ENCODE measurements at regions of chr11 and their contacts with region 1.

Region 1: GRCh38 chr11:126440792-126441514 is 85.5 kb downstream of the ST3GAL4 start:
- DNase-seq: peak; percentile 57 to 72 (median 58)
- H3K4me3 ChIP-seq: no peak overlapping the region
- H3K4me3 Mint-ChIP-seq: peak overlapping the region in 1 of 2 donors; percentile 35
- H3K27ac ChIP-seq: no peak overlapping the region
- H3K27ac Mint-ChIP-seq: peak overlapping the region in 1 of 7 donors; percentile 32
- H3K4me1 ChIP-seq: peaks cover 4% of the 10 kb centered on the region in 2 donors
- H3K4me1 Mint-ChIP-seq: peaks cover 5% of the 10 kb centered on the region
- H3K27me3 ChIP-seq: no peaks in the 10 kb centered on the region
- H3K27me3 Mint-ChIP-seq: peaks cover 0 to 1% (median 0%) of the 10 kb centered on the region in 3 donors
- CTCF ChIP-seq: peak; percentile 98

Region 2: GRCh38 chr11:125874556-125875124 is 566.3 kb before region 1 on chr11:
- intact Hi-C with region 1: no loop called
- DNase-seq: peak; percentile 11 to 44 (median 39)
- H3K4me3 ChIP-seq: no peak overlapping the region
- H3K4me3 Mint-ChIP-seq: no peak overlapping the region
- H3K27ac ChIP-seq: no peak overlapping the region
- H3K27ac Mint-ChIP-seq: no peak overlapping the region
- H3K4me1 ChIP-seq: no peaks in the 10 kb centered on the region
- H3K4me1 Mint-ChIP-seq: peaks cover 1% of the 10 kb centered on the region
- H3K27me3 ChIP-seq: peaks cover 0 to 2% of the 10 kb centered on the region in 2 donors
- H3K27me3 Mint-ChIP-seq: peaks cover 2 to 13% (median 4%) of the 10 kb centered on the region in 3 donors
- CTCF ChIP-seq: peak; percentile 82

Region 3: GRCh38 chr11:126480410-126481302 is 39.7 kb after region 1 on chr11:
- intact Hi-C with region 1: loop called (anchors 2 kb)
- DNase-seq: peak; percentile 72 to 81 (median 76)
- H3K4me3 ChIP-seq: peak overlapping the region in 1 of 3 experiments; percentile 45
- H3K4me3 Mint-ChIP-seq: peak overlapping the region; percentile 52 to 84
- H3K27ac ChIP-seq: no peak overlapping the region
- H3K27ac Mint-ChIP-seq: peak overlapping the region in 4 of 7 donors; percentile 37 to 53 (median 48)
- H3K4me1 ChIP-seq: peaks cover 13 to 14% of the 10 kb centered on the region in 2 donors
- H3K4me1 Mint-ChIP-seq: peaks cover 18% of the 10 kb centered on the region
- H3K27me3 ChIP-seq: no peaks in the 10 kb centered on the region
- H3K27me3 Mint-ChIP-seq: peaks cover 0 to 7% (median 3%) of the 10 kb centered on the region in 3 donors
- CTCF ChIP-seq: peak; percentile 95

Region 4: GRCh38 chr11:126547161-126547560 is 106.2 kb after region 1 on chr11:
- intact Hi-C with region 1: no loop called
- DNase-seq: no peak
- H3K4me3 ChIP-seq: no peak overlapping the region
- H3K4me3 Mint-ChIP-seq: no peak overlapping the region
- H3K27ac ChIP-seq: no peak overlapping the region
- H3K27ac Mint-ChIP-seq: no peak overlapping the region
- H3K4me1 ChIP-seq: no peaks in the 10 kb centered on the region
- H3K4me1 Mint-ChIP-seq: no peaks in the 10 kb centered on the region
- H3K27me3 ChIP-seq: peaks cover 2 to 20% of the 10 kb centered on the region in 2 donors
- H3K27me3 Mint-ChIP-seq: peaks cover 12 to 22% (median 22%) of the 10 kb centered on the region in 3 donors
- CTCF ChIP-seq: no peak

Region 5: DNA sequence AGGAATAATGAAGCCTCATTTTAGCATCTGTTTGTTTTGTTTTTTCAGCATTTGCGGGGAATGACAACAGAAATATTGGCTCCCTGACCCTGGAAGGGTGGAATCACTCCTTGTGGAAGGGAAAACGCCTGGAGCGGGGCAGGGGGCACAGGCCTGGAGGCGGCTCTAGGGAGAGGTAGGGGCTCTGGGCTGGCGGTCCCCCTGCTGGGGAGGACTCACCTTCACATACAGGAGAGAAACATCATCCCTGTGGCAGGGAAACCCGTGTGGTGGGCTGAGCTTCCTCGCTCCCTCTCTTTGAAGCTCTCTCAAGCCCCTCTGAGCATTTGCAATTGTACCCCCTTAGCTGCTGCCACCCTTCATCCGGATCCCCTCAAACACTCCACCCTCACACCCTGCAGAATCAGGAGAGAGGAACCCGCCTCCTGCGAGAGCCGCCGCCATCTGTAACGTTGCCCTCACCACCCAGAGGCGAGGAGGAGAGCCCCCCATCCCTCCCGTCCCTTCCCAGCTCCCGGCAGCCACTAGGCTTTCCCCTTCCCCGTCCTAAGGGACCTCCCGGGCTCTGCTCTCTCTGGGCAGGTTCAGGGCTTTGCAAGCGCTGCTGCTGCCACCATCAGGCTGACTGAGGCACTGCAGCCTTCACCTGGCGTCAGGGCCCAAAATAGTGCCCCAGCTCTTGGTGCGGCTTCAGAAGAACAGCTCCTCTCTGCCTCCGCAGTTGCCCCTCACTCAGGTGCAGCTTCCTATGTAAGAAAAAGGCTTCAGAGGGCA is 549.2 kb after region 1 on chr11:
- intact Hi-C with region 1: loop called (anchors 2 to 5 kb)
- DNase-seq: peak; percentile 1 to 42 (median 9)
- H3K4me3 ChIP-seq: no peak overlapping the region
- H3K4me3 Mint-ChIP-seq: no peak overlapping the region
- H3K27ac ChIP-seq: no peak overlapping the region
- H3K27ac Mint-ChIP-seq: no peak overlapping the region
- H3K4me1 ChIP-seq: no peaks in the 10 kb centered on the region
- H3K4me1 Mint-ChIP-seq: no peaks in the 10 kb centered on the region
- H3K27me3 ChIP-seq: peaks cover 2 to 10% of the 10 kb centered on the region in 2 donors
- H3K27me3 Mint-ChIP-seq: peaks cover 7 to 22% (median 12%) of the 10 kb centered on the region in 3 donors
- CTCF ChIP-seq: peak; percentile 90

Region 6: DNA sequence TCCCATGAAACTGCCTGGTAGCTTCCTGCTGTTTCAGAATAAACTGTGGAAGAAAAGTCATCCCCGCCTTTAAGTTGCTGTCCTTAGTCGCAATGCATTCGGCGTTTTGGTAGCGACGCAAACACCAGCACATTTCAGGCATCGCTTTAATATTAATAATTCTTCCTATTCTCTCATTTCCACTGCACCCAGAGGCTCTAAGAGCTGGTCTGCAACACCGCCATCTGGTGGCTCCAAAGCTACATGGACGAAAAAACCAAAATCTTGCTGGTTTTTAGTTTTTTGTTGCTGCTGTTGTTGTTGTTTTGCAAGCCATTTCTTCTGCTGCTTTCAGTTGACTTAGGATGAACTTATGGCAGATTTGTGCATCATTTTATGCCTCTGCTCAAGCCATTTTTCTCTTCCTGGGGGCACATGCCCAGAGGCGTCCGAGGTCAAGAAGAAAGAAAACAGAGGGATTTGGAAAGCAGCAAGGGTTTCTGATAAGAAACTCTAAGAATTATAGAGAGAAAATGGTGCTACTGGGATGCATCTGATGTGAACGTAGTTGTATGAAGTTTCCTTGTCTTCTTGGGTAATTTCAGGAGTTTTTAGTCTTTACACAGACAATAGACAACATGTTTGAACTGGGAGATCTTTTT is 905.0 kb after region 1 on chr11:
- intact Hi-C with region 1: loop called (anchors 5 to 10 kb)
- DNase-seq: no peak
- H3K4me3 ChIP-seq: no peak overlapping the region
- H3K4me3 Mint-ChIP-seq: no peak overlapping the region
- H3K27ac ChIP-seq: no peak overlapping the region
- H3K27ac Mint-ChIP-seq: no peak overlapping the region
- H3K4me1 ChIP-seq: no peaks in the 10 kb centered on the region
- H3K4me1 Mint-ChIP-seq: no peaks in the 10 kb centered on the region
- H3K27me3 ChIP-seq: no peaks in the 10 kb centered on the region
- H3K27me3 Mint-ChIP-seq: peaks cover 0 to 5% (median 4%) of the 10 kb centered on the region in 3 donors
- CTCF ChIP-seq: peak; percentile 29

Measured in CD14-positive monocyte (primary cell).